ENCODE measurements at regions of chr4 and their contacts with region 1.

Region 1: GRCh38 chr4:74531963-74532794 is 87.2 kb downstream of the AREG start:
- DNase-seq: peak in 1 of 2 experiments; percentile 13
- H3K4me3 ChIP-seq: no peak overlapping the region
- H3K27ac ChIP-seq: no peak overlapping the region
- H3K4me1 ChIP-seq: no peaks in the 10 kb centered on the region
- H3K27me3 ChIP-seq: no peaks in the 10 kb centered on the region
- CTCF ChIP-seq: peak in 2 of 3 experiments; percentile 70 to 86; a peak in 3 of 4 replicates
- EP300 ChIP-seq: no peak
- POLR2A ChIP-seq: no peak
- RAD21 ChIP-seq: peak; percentile 69 to 76

Region 2: GRCh38 chr4:74320559-74321118 is 211.5 kb before region 1 on chr4:
- CTCF ChIA-PET with region 1: interaction called, 17 read pairs
- POLR2A ChIA-PET with region 1: no interaction called
- DNase-seq: peak; percentile 27 to 64
- H3K4me3 ChIP-seq: peak overlapping the region in 1 of 4 experiments; percentile 2; a peak in 1 of 8 replicates
- H3K27ac ChIP-seq: no peak overlapping the region
- H3K4me1 ChIP-seq: peaks cover 0 to 7% (median under 1%) of the 10 kb centered on the region in 4 experiments; a peak in 2 of 7 replicates
- H3K27me3 ChIP-seq: no peaks in the 10 kb centered on the region
- CTCF ChIP-seq: peak in 2 of 3 experiments; percentile 45 to 48; a peak in 2 of 4 replicates
- EP300 ChIP-seq: no peak
- POLR2A ChIP-seq: no peak
- RAD21 ChIP-seq: peak; percentile 80 to 82

Region 3: GRCh38 chr4:74370912-74371311 is 161.3 kb before region 1 on chr4:
- CTCF ChIA-PET with region 1: interaction called, 51 read pairs
- POLR2A ChIA-PET with region 1: no interaction called
- DNase-seq: no peak
- H3K4me3 ChIP-seq: no peak overlapping the region
- H3K27ac ChIP-seq: no peak overlapping the region
- H3K4me1 ChIP-seq: no peaks in the 10 kb centered on the region
- H3K27me3 ChIP-seq: peaks cover 0 to 1% (median 0%) of the 10 kb centered on the region in 4 experiments; a peak in 2 of 7 replicates
- CTCF ChIP-seq: peak; percentile 63 to 86 (median 81)
- EP300 ChIP-seq: no peak
- POLR2A ChIP-seq: no peak
- RAD21 ChIP-seq: peak; percentile 81 to 85

Region 4: DNA sequence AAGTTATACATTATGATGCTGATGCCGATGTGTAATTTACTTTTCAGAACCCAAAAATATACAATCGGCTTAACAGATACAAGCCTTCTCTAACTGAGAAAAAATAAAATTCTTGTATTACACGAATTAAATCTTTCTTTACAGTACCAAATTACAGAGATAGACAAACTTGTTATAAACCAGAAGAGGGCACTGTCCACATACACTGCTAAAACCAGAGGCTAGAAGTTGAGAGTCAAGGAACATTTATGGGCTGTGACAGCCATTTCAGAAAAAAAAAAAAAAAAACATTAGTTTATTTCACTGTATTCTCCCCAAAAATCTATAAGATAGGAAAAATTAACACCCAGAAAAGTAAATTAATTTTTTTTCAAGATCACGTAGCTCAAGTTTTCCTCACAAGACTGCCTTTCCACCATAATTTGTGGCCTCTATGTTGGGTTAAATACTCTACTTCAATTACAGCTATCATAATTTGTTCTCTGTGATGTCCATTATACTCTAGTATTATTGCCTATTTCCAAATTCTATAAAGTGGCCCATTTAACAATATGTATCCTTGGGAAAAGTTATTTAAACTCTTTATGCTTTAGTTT is 155.2 kb before region 1 on chr4:
- CTCF ChIA-PET with region 1: interaction called, 51 read pairs
- POLR2A ChIA-PET with region 1: no interaction called
- DNase-seq: no peak
- H3K4me3 ChIP-seq: no peak overlapping the region
- H3K27ac ChIP-seq: no peak overlapping the region
- H3K4me1 ChIP-seq: no peaks in the 10 kb centered on the region
- H3K27me3 ChIP-seq: no peaks in the 10 kb centered on the region
- CTCF ChIP-seq: peak in 2 of 3 experiments; percentile 36 to 49; a peak in 2 of 4 replicates
- EP300 ChIP-seq: no peak
- POLR2A ChIP-seq: no peak
- RAD21 ChIP-seq: peak; percentile 71 to 73

Region 5: DNA sequence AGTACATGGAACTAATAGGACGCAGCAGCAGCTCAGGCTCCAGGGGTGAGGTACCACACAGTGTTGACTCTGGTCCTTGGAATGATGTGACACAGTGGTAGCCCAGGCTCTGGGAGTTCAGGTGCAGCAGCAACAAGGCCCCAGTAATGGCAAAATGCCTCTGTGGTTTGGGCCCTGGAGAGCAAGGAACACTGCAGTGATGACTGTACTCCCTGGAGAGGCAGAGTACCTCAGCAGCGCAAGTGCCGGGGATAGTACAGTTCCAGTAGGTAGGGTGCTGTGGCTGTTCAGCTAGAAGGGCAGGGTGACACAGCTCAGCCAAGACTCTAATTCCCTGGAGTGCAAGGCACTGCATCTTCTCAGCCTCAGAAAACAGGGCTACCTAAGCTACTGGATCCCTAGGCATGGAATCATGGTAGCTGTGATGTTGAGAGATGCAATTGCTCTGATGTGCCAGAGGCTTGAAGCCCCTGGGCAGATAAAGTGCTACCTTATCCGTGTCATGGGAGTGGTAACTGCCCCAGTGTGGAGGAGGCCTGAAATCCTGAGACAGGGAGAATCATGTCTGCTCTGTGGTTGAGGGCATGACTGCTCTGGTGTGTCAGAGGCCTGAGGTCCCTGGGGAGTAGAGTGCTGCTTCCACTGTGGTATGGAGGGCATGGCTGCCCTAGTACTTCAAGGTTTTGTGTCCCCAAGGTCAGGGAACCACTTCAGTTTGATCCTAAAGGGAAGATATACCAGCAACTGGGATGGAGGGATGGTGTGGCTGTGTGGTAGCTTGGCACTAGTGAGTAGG is 32.0 kb before region 1 on chr4:
- CTCF ChIA-PET with region 1: interaction called, 15 read pairs
- POLR2A ChIA-PET with region 1: no interaction called
- DNase-seq: no peak
- H3K4me3 ChIP-seq: no peak overlapping the region
- H3K27ac ChIP-seq: no peak overlapping the region
- H3K4me1 ChIP-seq: no peaks in the 10 kb centered on the region
- H3K27me3 ChIP-seq: no peaks in the 10 kb centered on the region
- CTCF ChIP-seq: no peak
- EP300 ChIP-seq: no peak
- POLR2A ChIP-seq: no peak
- RAD21 ChIP-seq: no peak

Region 6: DNA sequence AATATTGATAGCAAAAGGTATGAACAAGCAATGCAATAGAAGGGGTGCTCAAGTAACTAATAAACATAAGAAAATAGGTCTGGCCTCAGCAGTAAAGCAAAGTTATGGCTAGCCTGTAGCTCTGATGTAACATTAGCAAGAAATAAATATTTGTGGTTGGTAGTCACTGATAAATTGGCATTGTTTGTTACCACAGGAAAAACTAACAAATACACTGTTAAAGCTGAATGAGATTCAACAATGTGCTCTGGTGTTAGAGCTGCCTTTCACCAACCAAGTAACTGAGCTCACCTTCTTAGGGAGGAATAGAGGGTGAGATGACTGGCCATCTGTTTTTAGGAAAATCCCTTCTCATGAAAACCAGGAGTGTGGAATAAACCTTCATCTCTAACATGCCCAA is 15.9 kb before region 1 on chr4:
- CTCF ChIA-PET with region 1: interaction called, 31 read pairs
- POLR2A ChIA-PET with region 1: no interaction called
- DNase-seq: no peak
- H3K4me3 ChIP-seq: no peak overlapping the region
- H3K27ac ChIP-seq: no peak overlapping the region
- H3K4me1 ChIP-seq: no peaks in the 10 kb centered on the region
- H3K27me3 ChIP-seq: no peaks in the 10 kb centered on the region
- CTCF ChIP-seq: no peak
- EP300 ChIP-seq: no peak
- POLR2A ChIP-seq: no peak
- RAD21 ChIP-seq: no peak

Region 7: GRCh38 chr4:74543231-74543670 is 11.1 kb after region 1 on chr4:
- CTCF ChIA-PET with region 1: interaction called, 14 read pairs
- POLR2A ChIA-PET with region 1: interaction called, 3 read pairs
- DNase-seq: no peak
- H3K4me3 ChIP-seq: no peak overlapping the region
- H3K27ac ChIP-seq: no peak overlapping the region
- H3K4me1 ChIP-seq: peaks cover 0 to 8% (median 2%) of the 10 kb centered on the region in 4 experiments; a peak in 3 of 7 replicates
- H3K27me3 ChIP-seq: no peaks in the 10 kb centered on the region
- CTCF ChIP-seq: no peak
- EP300 ChIP-seq: no peak
- POLR2A ChIP-seq: no peak
- RAD21 ChIP-seq: no peak

Measured in H1 (cell line).